ENCODE measurements at regions of chr19 and their contacts with region 1.

Region 1: DNA sequence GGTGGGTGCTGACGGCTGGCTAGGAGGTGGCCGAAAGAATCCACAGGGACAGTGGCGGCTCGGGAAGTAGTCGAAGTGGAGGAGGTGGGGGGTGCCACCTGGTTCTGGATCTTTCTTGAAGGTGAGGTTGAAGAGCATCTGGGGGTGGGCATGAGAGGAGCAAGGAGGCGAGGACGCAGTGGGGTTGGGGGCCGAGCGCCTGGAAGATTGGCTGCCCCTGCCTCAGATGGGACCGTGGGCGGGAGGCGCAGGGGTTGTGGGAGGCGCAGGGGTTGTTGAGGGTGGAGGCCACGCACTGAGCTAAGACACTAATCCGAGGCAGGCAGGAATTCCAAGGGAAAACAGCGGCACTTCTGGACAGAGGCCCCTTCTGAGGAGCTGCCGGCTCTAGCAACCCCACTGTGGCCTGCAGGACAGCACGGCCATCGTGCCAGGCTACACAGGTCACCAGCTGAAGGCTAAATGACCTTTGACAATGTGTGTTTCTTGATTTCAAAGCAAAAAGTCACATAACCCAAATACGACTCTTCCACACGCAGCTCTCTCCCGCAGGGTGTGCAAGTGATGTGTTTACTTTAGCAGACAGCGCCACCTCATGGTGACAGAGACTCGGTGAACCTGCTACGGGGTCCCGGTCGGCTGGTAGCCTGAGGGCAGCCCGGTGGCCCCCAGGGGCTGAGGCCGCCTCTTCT is 44.1 kb upstream of the RANBP3 start:
- DNase-seq: peak; percentile 92
- H3K4me3 ChIP-seq: peak overlapping the region in 1 of 2 experiments; percentile 39; a peak in 1 of 4 replicates
- H3K27ac ChIP-seq: peak overlapping the region in 1 of 2 experiments; percentile 85; a peak in 1 of 4 replicates
- H3K4me1 ChIP-seq: peaks cover 6 to 10% of the 10 kb centered on the region in 2 experiments; a peak in 3 of 4 replicates
- H3K27me3 ChIP-seq: no peaks in the 10 kb centered on the region
- CTCF ChIP-seq: peak; percentile 74
- EP300 ChIP-seq: no peak
- RAD21 ChIP-seq: peak; percentile 94

Region 2: GRCh38 chr19:5775668-5776309 is 246.2 kb before region 1 on chr19:
- CTCF ChIA-PET with region 1: interaction called, 10 read pairs
- POLR2A ChIA-PET with region 1: no interaction called
- DNase-seq: no peak
- H3K4me3 ChIP-seq: no peak overlapping the region
- H3K27ac ChIP-seq: no peak overlapping the region
- H3K4me1 ChIP-seq: no peaks in the 10 kb centered on the region; a peak in 1 of 4 replicates
- H3K27me3 ChIP-seq: no peaks in the 10 kb centered on the region
- CTCF ChIP-seq: no peak
- EP300 ChIP-seq: no peak
- RAD21 ChIP-seq: no peak

Region 3: GRCh38 chr19:5850743-5851293 is 171.2 kb before region 1 on chr19:
- CTCF ChIA-PET with region 1: no interaction called
- POLR2A ChIA-PET with region 1: no interaction called
- DNase-seq: peak; percentile 9
- H3K4me3 ChIP-seq: no peak overlapping the region
- H3K27ac ChIP-seq: no peak overlapping the region
- H3K4me1 ChIP-seq: no peaks in the 10 kb centered on the region
- H3K27me3 ChIP-seq: peaks cover 17% of the 10 kb centered on the region
- CTCF ChIP-seq: no peak
- EP300 ChIP-seq: no peak
- RAD21 ChIP-seq: no peak

Region 4: DNA sequence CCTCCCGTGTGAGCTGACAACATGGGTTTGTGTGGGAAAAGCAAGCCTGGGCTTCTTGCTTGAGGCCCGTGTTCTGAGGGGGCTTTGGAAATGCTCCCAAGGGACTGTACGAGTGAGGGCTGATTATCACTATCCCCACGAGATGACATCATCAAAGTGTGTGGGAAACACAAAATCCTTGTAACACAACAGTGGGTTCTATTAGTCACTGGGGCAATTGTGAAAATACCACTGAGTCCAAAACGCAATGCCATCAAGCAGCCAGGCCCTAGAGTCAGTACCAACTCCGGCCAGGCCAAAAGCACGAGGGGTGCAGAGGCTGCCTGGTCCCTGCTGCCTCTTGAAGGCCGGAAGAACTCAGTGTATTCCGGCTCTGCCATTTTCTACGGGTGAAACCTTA is 78.4 kb before region 1 on chr19:
- CTCF ChIA-PET with region 1: interaction called, 19 read pairs
- POLR2A ChIA-PET with region 1: no interaction called
- DNase-seq: no peak
- H3K4me3 ChIP-seq: no peak overlapping the region
- H3K27ac ChIP-seq: no peak overlapping the region
- H3K4me1 ChIP-seq: peaks cover 0 to 19% of the 10 kb centered on the region in 2 experiments; a peak in 1 of 4 replicates
- H3K27me3 ChIP-seq: no peaks in the 10 kb centered on the region
- CTCF ChIP-seq: no peak
- EP300 ChIP-seq: no peak
- RAD21 ChIP-seq: no peak

Region 5: GRCh38 chr19:5967994-5968430 is 54.0 kb before region 1 on chr19:
- CTCF ChIA-PET with region 1: interaction called, 35 read pairs
- POLR2A ChIA-PET with region 1: no interaction called
- DNase-seq: peak; percentile 79
- H3K4me3 ChIP-seq: no peak overlapping the region
- H3K27ac ChIP-seq: peak overlapping the region in 1 of 2 experiments; percentile 73; a peak in 2 of 4 replicates
- H3K4me1 ChIP-seq: peaks cover 0 to 25% of the 10 kb centered on the region in 2 experiments; a peak in 1 of 4 replicates
- H3K27me3 ChIP-seq: no peaks in the 10 kb centered on the region
- CTCF ChIP-seq: peak; percentile 88
- EP300 ChIP-seq: peak in 1 of 2 experiments; percentile 62; a peak in 2 of 4 replicates
- RAD21 ChIP-seq: peak; percentile 66

Region 6: GRCh38 chr19:5993648-5994358 is 28.2 kb before region 1 on chr19:
- CTCF ChIA-PET with region 1: interaction called, 448 read pairs
- POLR2A ChIA-PET with region 1: no interaction called
- DNase-seq: peak; percentile 93
- H3K4me3 ChIP-seq: no peak overlapping the region
- H3K27ac ChIP-seq: peak overlapping the region in 1 of 2 experiments; percentile 94; a peak in 2 of 4 replicates
- H3K4me1 ChIP-seq: peaks cover 0 to 32% of the 10 kb centered on the region in 2 experiments; a peak in 2 of 4 replicates
- H3K27me3 ChIP-seq: no peaks in the 10 kb centered on the region
- CTCF ChIP-seq: no peak
- EP300 ChIP-seq: peak in 1 of 2 experiments; percentile 84; a peak in 2 of 4 replicates
- RAD21 ChIP-seq: 0 out of 2 replicates have a peak, but pooled peaks have one; percentile 1

Region 7: DNA sequence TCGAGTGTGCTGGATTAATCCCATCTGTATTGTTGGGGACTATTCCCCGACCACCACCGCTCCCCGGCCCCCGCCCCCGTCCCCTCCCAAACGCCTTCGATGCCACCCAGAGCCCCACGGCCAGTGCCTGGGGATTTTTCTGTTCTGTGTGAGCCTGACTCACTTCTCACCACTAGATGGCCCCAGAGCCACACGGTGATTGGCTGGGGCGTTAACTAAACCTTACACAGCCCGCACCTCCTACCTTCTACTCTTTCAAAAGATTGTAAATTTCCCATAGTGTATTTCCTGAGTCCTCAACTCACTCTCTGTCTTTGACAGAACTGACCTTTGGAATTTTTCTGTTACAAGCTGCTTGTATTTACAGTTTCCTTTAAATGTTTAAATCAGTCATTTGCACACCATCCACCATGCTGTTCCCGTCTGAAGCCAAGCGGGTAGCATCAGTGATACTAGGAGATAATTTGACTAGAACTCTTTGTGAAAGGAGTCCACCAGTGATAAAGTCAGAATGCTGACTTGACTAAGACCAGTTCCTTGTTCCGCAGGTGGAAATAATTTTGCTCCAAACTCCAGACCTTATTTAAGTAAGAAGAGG is 26.9 kb after region 1 on chr19:
- CTCF ChIA-PET with region 1: interaction called, 34 read pairs
- POLR2A ChIA-PET with region 1: no interaction called
- DNase-seq: peak; percentile 91
- H3K4me3 ChIP-seq: peak overlapping the region in 1 of 2 experiments; percentile 5; a peak in 1 of 4 replicates
- H3K27ac ChIP-seq: peak overlapping the region in 1 of 2 experiments; percentile 35; a peak in 1 of 4 replicates
- H3K4me1 ChIP-seq: peaks cover 0 to 3% of the 10 kb centered on the region in 2 experiments; a peak in 1 of 4 replicates
- H3K27me3 ChIP-seq: no peaks in the 10 kb centered on the region
- CTCF ChIP-seq: peak; percentile 85
- EP300 ChIP-seq: no peak
- RAD21 ChIP-seq: peak; percentile 96

Measured in SK-N-SH (cell line).